GM12878 (cell line): ENCODE measurements at regions of chr3 and their contacts with region 1.

Region 1: DNA sequence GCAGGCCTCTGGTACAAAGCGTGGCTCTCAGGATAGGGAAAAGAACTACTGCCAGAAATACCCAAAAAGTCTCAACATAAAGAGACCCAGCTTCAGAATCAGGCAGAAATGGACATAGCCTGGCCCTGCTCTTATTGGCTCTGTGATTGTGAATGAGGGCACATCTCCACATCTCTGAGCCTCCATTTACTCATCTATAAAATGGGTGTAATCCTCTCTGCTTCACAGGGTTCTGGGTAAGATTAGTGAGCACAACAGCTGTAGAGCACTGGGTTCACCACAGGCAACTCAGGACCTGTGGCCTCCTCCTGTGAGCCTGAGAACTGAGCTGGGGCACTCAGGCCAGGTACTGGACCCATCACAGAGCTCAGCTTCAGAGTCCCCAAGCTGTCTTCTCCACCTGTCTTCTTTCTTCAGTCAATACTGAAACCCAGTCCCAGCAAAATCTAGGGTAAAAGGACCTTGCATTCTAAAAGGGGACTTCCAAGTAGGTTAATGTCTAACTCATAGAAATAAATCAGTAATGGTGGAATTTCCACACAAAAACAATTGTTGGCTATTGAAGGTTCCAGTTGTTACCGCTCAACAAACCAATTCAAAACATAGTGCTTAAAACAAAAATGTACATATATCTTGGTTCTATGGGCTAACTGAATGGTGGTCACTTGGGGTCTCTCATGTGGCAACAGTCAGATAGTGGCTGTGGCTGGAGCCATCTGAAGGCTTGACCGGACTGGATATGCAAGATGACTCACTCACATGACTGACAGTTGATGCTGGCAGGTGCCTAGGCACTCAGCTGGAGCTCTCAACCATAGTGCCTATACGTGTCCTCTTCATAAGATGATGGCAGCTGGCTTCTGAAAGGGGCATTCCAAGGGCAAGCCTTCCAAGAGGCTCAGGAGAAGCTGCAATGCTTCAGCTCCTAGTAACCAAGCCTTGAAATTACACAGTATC is 47.3 kb downstream of the TRIM42 start:
- DNase-seq: no peak
- ATAC-seq: peak; percentile 86
- H3K4me3 ChIP-seq: no peak overlapping the region
- H3K27ac ChIP-seq: peak overlapping the region; percentile 58
- H3K4me1 ChIP-seq: peaks cover 11% of the 10 kb centered on the region; the same call in 1 of the 2 replicates
- H3K27me3 ChIP-seq: no peaks in the 10 kb centered on the region
- CTCF ChIP-seq: no peak
- EP300 ChIP-seq: peak in 1 of 2 experiments; percentile 21; a peak in 2 of 4 replicates
- POLR2A ChIP-seq: no peak
- RAD21 ChIP-seq: no peak

Region 2: DNA sequence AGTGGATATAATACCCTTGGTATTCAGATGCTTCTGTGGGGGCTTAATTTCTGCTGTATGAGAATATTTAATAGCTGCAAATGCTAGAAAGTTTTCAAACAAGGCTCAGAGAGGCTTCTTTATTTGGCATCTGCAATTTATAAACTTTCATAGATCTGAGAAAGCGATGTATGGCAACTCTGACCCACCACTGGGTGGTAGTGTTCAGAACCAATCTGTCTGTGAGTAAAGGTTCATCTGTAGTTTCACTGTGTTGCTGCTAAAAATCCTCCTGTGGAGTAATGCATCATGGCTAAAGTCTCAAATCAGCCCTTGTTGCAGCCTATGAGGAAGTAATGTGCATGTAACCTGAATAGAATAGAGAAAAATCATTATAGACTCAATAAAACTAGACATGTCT is 742.7 kb before region 1 on chr3:
- CTCF ChIA-PET with region 1: no interaction called
- POLR2A ChIA-PET with region 1: no interaction called
- RAD21 ChIA-PET with region 1: no interaction called
- SMC1A ChIA-PET with region 1: no interaction called
- in situ Hi-C with region 1: no loop called
- intact Hi-C with region 1: no loop called
- DNase-seq: no peak
- ATAC-seq: no peak
- H3K4me3 ChIP-seq: no peak overlapping the region
- H3K27ac ChIP-seq: no peak overlapping the region
- H3K4me1 ChIP-seq: no peaks in the 10 kb centered on the region
- H3K27me3 ChIP-seq: no peaks in the 10 kb centered on the region; a peak in 1 of 4 replicates
- CTCF ChIP-seq: no peak
- EP300 ChIP-seq: no peak
- POLR2A ChIP-seq: no peak
- RAD21 ChIP-seq: no peak

Region 3: GRCh38 chr3:140455521-140456214 is 269.5 kb before region 1 on chr3:
- CTCF ChIA-PET with region 1: no interaction called
- POLR2A ChIA-PET with region 1: no interaction called
- RAD21 ChIA-PET with region 1: no interaction called
- SMC1A ChIA-PET with region 1: no interaction called
- in situ Hi-C with region 1: no loop called
- intact Hi-C with region 1: no loop called
- DNase-seq: no peak
- ATAC-seq: no peak
- H3K4me3 ChIP-seq: no peak overlapping the region
- H3K27ac ChIP-seq: no peak overlapping the region
- H3K4me1 ChIP-seq: no peaks in the 10 kb centered on the region
- H3K27me3 ChIP-seq: peaks cover 0 to 3% of the 10 kb centered on the region in 2 experiments; a peak in 2 of 4 replicates
- CTCF ChIP-seq: no peak
- EP300 ChIP-seq: no peak
- POLR2A ChIP-seq: no peak
- RAD21 ChIP-seq: no peak

Region 4: GRCh38 chr3:140636406-140637130 is 88.6 kb before region 1 on chr3:
- CTCF ChIA-PET with region 1: no interaction called
- POLR2A ChIA-PET with region 1: no interaction called
- RAD21 ChIA-PET with region 1: no interaction called
- SMC1A ChIA-PET with region 1: interaction called, 10 read pairs
- in situ Hi-C with region 1: no loop called
- intact Hi-C with region 1: no loop called
- DNase-seq: no peak
- ATAC-seq: no peak
- H3K4me3 ChIP-seq: no peak overlapping the region
- H3K27ac ChIP-seq: no peak overlapping the region
- H3K4me1 ChIP-seq: no peaks in the 10 kb centered on the region
- H3K27me3 ChIP-seq: no peaks in the 10 kb centered on the region
- CTCF ChIP-seq: no peak
- EP300 ChIP-seq: no peak
- POLR2A ChIP-seq: no peak
- RAD21 ChIP-seq: no peak

Region 5: DNA sequence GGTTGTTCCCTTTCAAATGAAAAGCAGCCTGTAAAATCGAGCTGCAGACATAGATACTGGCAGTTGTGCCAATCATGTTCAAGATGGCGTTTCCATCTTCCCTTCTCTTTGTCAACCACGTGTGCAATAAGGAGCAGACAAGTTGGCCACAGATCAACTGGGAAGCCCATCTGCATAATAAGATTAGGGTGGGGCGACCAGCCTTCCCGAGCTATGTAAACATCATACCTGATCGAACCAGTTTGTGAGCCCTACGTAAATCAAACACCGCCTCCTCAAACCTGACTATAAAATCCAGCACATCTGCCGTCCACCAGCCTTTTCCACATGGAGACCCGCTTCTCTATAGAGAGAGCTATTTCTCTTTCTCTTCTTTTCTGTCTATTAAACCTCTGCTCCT is 10.1 kb before region 1 on chr3:
- CTCF ChIA-PET with region 1: interaction called, 4 read pairs
- POLR2A ChIA-PET with region 1: interaction called, 5 read pairs
- RAD21 ChIA-PET with region 1: interaction called, 16 read pairs
- SMC1A ChIA-PET with region 1: interaction called, 22 read pairs
- in situ Hi-C with region 1: no loop called
- intact Hi-C with region 1: no loop called
- DNase-seq: no peak
- ATAC-seq: no peak
- H3K4me3 ChIP-seq: no peak overlapping the region
- H3K27ac ChIP-seq: no peak overlapping the region
- H3K4me1 ChIP-seq: 0 out of 2 replicates have a peak, but pooled peaks cover 4% of the 10 kb centered on the region
- H3K27me3 ChIP-seq: no peaks in the 10 kb centered on the region
- CTCF ChIP-seq: no peak
- EP300 ChIP-seq: no peak
- POLR2A ChIP-seq: no peak
- RAD21 ChIP-seq: no peak

Region 6: DNA sequence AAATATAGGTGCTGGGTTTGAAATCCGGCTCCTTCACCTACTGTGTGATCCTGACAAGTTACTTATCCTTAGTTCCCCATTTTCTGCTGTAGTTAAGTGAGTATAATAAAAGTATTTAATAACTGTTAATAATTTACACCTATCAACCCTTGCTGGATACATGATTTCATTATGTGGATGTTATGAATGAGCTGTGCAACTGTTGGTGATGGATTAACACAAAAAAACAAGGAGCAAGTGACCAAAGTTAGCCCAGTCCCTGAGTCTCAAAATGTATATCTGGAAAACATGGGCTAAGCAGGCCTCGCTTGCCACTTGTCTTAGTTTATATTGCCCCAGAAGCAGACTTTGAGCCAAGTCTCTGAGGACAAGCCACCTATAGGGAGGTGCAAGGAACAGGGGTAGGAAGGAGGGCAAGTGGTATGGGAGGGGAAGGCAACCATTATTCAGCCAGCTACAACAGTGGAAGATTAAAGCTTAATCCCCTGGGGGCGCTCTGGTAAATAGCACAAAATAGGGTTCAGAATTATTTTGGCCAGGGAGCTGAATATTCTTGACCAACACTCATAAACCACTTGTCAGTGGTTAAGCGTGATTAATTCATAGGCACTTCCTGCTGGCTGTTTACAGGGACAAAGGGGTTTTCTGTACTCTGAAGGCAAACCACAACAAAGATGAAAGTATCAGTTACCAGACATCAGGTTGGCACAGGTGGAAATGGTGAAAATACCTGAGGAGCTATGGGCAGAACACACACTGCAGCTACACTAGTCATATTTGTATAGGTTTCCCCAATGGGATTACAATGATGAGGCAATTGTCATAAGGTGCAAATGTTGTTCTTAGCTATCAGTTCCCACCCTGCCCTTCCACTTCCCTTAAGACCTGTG is 29.0 kb after region 1 on chr3:
- CTCF ChIA-PET with region 1: interaction called, 5 read pairs
- POLR2A ChIA-PET with region 1: interaction called, 4 read pairs
- RAD21 ChIA-PET with region 1: interaction called, 13 read pairs
- SMC1A ChIA-PET with region 1: interaction called, 15 read pairs
- in situ Hi-C with region 1: no loop called
- intact Hi-C with region 1: no loop called
- DNase-seq: peak; percentile 87
- ATAC-seq: peak; percentile 86
- H3K4me3 ChIP-seq: no peak overlapping the region
- H3K27ac ChIP-seq: no peak overlapping the region
- H3K4me1 ChIP-seq: peaks cover 23% of the 10 kb centered on the region
- H3K27me3 ChIP-seq: no peaks in the 10 kb centered on the region
- CTCF ChIP-seq: peak in 2 of 3 experiments; percentile 8 to 19; a peak in 1 of 6 replicates
- EP300 ChIP-seq: peak; percentile 89 to 91
- POLR2A ChIP-seq: no peak
- RAD21 ChIP-seq: peak; percentile 6; the same call in 1 of the 2 replicates

Region 7: GRCh38 chr3:140910860-140911259 is 185.7 kb after region 1 on chr3:
- CTCF ChIA-PET with region 1: no interaction called
- POLR2A ChIA-PET with region 1: no interaction called
- RAD21 ChIA-PET with region 1: no interaction called
- SMC1A ChIA-PET with region 1: no interaction called
- in situ Hi-C with region 1: no loop called
- intact Hi-C with region 1: no loop called
- DNase-seq: no peak
- ATAC-seq: no peak
- H3K4me3 ChIP-seq: no peak overlapping the region
- H3K27ac ChIP-seq: no peak overlapping the region
- H3K4me1 ChIP-seq: no peaks in the 10 kb centered on the region
- H3K27me3 ChIP-seq: no peaks in the 10 kb centered on the region
- CTCF ChIP-seq: no peak
- EP300 ChIP-seq: no peak
- POLR2A ChIP-seq: no peak
- RAD21 ChIP-seq: no peak